HEK293T (cell line): ENCODE measurements at regions of chr10 and their contacts with region 1.

Region 1: GRCh38 chr10:47311932-47312662 is 10.2 kb upstream of the GDF2 start:
- DNase-seq: peak; percentile 79

Region 2: DNA sequence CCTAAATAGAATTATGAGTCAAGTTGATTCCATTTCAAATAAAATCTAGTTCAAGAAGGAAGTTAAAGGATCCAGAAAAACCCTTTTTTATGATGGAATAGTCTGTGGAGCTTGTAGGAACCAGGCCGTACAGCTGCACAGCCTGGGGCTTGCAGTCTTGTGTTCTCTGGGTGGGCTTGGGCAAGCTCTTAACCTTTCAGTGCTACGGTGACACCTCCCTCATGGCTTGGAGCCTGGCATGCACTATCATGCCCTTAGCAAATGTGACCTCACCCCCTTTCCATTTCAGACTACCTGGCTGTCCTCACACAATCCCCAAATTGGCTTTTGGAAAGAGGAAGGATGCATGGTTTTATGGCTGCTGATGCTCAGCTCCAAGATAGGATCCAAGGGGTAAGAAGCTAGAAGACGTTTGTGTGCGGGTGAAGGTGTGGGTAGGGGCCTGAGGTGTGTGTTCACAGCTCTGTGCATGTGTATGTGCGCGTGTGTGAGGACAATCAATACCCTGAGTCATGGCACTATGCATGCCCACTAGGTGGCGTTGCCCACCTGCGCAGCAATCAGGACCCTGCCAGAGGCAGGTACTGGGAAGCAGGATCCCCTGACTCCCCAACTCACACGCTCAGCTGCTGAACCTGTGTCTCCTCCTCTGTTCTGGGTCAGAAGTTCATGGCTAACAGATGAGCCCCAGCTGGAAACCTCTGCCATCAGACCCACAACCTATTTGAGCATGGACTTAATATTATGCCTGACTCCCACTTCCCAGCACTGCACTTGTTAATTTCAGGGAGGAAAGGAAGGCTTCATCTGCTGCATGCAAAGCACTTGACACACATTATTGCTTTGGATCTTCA is 287.5 kb before region 1 on chr10:
- CTCF ChIA-PET with region 1: interaction called, 28 read pairs
- POLR2A ChIA-PET with region 1: no interaction called
- DNase-seq: peak; percentile 73

Region 3: DNA sequence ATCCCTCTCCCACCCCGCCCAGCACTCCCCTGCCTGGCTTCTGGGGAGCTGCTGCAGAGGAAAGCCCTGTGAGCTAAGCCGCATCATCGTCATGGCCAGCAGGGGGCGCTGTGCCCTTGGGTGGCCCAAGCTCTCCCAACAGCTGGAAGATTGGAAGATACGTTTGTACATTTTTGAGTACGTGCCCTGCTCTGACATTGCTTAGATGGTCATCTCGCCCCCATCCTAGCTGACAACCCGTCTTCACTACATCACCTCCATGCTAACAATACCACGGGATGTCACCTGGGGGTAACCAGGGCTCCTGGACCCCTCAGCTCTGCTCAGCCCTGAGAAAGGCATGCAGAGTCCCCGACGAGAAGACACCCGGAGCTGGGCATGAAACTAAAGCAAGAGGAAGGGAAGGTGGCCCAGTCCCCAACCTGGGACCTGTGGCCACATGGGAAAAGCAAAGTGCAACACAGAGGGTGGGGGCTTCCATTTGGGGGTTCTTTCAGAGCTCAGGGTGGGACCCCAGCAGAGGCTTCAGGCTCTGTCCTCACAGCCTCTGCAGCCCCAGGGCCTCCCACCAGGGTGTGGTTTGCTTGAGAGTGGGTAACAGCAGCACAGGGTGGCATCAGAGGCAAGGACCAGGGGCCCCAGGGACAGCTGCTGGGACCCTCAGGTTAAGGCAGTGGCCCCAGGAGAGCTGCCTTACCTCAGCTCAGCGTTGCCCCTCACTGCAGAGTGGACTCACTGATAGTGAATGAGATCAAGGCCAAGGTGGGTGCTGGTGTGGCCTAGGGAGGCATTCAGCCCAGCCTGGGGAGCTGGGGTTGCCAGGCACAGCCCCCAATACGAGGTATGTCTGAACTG is 264.2 kb before region 1 on chr10:
- CTCF ChIA-PET with region 1: interaction called, 32 read pairs
- POLR2A ChIA-PET with region 1: no interaction called
- DNase-seq: peak; percentile 79